Gastrocnemius medialis (tissue), 4 donors: ENCODE measurements at regions of chr17 and their contacts with region 1.

Region 1: DNA sequence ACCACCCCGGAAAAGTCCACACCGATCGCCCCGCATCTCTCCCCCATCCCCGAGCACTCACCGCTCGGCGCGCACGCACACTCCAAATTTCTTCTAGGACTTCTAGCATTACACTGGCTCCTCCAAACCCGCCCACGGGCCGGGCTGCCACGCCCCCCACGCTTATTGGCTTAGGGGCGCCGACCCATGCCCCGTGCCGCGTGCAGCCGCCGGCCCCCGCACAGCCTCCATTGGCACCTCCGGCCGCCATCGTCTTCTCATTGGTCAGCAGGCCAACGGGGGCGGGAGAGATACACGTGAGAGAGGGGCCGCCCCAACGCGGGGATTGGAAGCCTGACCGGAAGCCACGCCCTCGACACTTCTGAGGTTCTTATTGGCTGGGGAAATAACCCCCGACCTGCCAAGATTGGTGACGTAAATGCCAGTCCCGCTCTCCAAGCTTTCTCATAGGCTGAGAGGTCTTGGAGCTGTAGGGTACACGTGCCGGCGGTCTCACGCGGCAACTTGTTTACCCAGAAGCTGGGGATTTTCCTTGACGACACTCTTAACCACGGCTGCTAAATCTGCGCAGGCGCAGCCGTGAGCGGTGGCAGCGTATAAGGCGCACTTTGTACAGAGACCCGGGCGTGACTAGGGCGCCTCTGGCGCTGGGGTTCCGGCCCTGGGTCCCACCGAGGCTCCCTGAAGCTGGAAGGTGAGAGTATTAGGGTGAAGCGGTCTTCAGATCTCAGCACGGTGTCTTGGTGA is 4.2 kb upstream of the PER1 start:
- DNase-seq: peak; percentile 100
- ATAC-seq: peak; percentile 53 to 63
- H3K4me3 ChIP-seq: peak overlapping the region; percentile 96 to 97 (median 96)
- H3K27ac ChIP-seq: peak overlapping the region; percentile 99 to 100 (median 100)
- H3K4me1 ChIP-seq: peaks cover 34 to 39% of the 10 kb centered on the region in 2 donors
- H3K27me3 ChIP-seq: no peaks in the 10 kb centered on the region
- CTCF ChIP-seq: peak in 2 of 5 experiments; percentile 11 to 25
- POLR2A ChIP-seq: peak; percentile 100

Region 2: DNA sequence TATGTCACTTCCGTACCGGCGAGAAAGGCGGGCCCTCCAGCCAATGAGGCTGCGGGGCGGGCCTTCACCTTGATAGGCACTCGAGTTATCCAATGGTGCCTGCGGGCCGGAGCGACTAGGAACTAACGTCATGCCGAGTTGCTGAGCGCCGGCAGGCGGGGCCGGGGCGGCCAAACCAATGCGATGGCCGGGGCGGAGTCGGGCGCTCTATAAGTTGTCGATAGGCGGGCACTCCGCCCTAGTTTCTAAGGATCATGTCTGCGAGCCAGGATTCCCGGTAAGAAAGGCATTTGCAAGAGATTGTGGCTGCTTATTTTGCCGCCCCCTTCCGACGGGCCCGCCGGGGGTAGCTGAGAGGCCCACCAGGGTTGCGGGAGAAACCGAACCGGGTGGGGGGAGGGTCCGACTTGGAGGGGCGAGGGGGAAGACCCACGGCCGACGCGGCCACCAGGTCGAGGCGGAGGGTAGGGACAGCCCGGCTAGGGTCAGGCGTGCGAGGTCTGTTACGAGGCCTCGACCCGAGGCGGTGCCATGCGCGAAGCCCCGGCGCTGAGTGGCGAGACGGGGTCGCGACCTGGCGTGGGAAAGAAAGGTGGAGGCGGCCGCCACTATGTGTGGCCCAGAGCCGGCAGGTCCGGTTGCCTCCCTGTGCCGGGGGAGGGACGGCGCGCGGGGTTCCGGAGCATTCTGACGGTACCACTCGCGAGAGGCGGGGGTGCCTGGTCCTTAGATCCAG is 583.7 kb before region 1 on chr17:
- in situ Hi-C with region 1: no loop called
- intact Hi-C with region 1: loop called (anchors 10 kb)
- DNase-seq: peak; percentile 99 to 100
- ATAC-seq: peak; percentile 14 to 83
- H3K4me3 ChIP-seq: peak overlapping the region; percentile 90 to 100 (median 95)
- H3K27ac ChIP-seq: peak overlapping the region; percentile 98 to 100 (median 99)
- H3K4me1 ChIP-seq: peaks cover 37 to 42% of the 10 kb centered on the region in 2 donors
- H3K27me3 ChIP-seq: no peaks in the 10 kb centered on the region
- CTCF ChIP-seq: no peak
- POLR2A ChIP-seq: peak; percentile 98 to 99

Region 3: GRCh38 chr17:8138672-8139371 is 17.6 kb before region 1 on chr17:
- in situ Hi-C with region 1: no loop called
- intact Hi-C with region 1: loop called (anchors 1 kb)
- DNase-seq: peak; percentile 82 to 93
- ATAC-seq: peak; percentile 66 to 74
- H3K4me3 ChIP-seq: peak overlapping the region; percentile 2 to 23 (median 2)
- H3K27ac ChIP-seq: peak overlapping the region; percentile 84 to 100 (median 100)
- H3K4me1 ChIP-seq: peaks cover 29 to 47% of the 10 kb centered on the region in 2 donors
- H3K27me3 ChIP-seq: no peaks in the 10 kb centered on the region
- CTCF ChIP-seq: peak; percentile 88 to 93 (median 89)
- POLR2A ChIP-seq: peak; percentile 64 to 78

Region 4: DNA sequence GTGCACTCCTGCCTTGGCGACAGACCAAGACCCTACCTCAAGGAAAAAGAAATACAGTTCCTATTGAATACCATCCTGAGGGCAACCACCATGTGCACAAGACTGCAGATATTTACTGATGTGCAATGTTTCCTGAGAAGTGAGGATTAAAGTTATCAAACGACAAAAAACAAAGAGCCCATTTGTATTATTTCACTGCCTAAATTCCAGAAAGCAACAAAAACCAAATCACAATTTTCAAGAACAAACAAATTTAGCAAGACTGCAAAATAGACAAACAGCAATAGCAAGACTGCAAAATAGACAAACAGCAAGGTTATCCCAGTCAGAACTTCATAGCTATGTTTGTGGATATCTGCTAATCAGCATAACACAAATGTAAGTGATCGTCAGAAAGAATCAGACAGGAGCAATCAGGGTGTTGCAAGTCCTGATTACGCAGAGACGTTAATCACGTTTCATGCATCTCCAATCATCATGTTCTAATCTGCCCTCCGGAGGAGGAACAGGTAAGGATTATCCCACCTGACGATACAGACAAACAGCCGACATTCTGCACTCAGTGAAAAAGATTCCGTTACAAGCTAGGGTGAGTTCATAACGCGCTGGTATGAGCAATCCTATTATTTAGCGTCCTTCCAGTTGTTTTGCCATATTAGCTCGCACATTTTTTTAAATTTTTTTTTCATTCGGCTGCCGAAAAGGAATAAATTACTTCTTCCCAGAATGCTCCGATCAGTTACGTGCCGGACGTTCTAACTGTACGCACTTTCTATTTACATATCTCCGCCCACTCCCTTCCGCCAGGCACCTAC is 16.8 kb after region 1 on chr17:
- in situ Hi-C with region 1: no loop called
- intact Hi-C with region 1: no loop called
- DNase-seq: peak; percentile 74 to 85
- ATAC-seq: peak; percentile 95 to 96
- H3K4me3 ChIP-seq: peak overlapping the region; percentile 29 to 54 (median 45)
- H3K27ac ChIP-seq: peak overlapping the region; percentile 77 to 91 (median 85)
- H3K4me1 ChIP-seq: peaks cover 8 to 25% of the 10 kb centered on the region in 2 donors
- H3K27me3 ChIP-seq: no peaks in the 10 kb centered on the region
- CTCF ChIP-seq: peak in 1 of 5 experiments; percentile 9
- POLR2A ChIP-seq: peak; percentile 99 to 100

Region 5: DNA sequence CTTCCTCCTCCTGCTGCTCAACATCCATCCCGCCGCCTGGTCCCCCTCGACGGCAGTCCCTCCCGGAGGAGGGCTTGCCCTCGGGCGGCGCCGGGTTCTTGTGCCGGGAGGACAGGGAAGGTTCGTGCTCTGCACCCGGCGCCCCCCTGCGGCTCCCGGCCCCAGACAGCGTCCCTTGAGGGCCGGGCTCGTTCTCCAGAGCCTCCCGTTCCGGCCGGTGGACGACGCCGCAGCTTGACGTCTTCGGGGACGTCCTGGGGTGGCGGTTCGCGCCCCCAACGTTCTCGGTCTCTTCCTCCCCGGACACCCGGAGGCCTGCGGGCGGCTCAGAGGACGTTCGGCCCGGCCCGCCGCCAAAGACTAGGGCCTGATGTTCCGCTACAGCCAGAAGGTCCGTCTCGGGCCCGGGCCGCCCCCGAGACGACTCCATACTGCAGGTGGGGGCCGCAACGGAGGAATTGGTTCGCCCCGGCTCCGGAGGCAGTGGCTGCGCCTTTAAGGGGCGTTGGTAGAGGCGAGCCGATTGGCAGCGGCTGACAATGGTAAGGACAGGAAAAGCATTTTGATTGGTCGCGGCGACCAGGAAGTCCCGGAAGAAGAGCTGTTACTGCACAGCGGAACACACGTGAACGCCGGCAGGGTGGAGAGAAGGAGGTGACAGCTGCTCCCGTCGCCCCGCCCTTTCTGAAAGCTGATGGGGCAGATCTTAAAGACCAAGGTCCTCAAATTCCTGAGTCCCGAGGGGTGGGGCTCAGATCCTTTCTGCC is 33.5 kb after region 1 on chr17 and contains the start of gene BORCS6:
- in situ Hi-C with region 1: no loop called
- intact Hi-C with region 1: loop called (anchors 2 kb)
- DNase-seq: peak; percentile 99
- ATAC-seq: peak; percentile 68 to 69
- H3K4me3 ChIP-seq: peak within 1 kb of the TSS; percentile 59 to 98 (median 84)
- H3K27ac ChIP-seq: peak within 1 kb of the TSS; percentile 86 to 99 (median 97)
- H3K4me1 ChIP-seq: peaks cover 37 to 42% of the 10 kb centered on the region in 2 donors
- H3K27me3 ChIP-seq: no peaks in the 10 kb centered on the region
- CTCF ChIP-seq: peak in 1 of 5 experiments; percentile 19
- POLR2A ChIP-seq: peak; percentile 83 to 91
- total RNA-seq, gene BORCS6: 16.2 to 34.5 (median 26.2) TPM

Region 6: GRCh38 chr17:8776881-8777280 is 620.5 kb after region 1 on chr17:
- in situ Hi-C with region 1: no loop called
- intact Hi-C with region 1: no loop called
- DNase-seq: no peak
- ATAC-seq: no peak
- H3K4me3 ChIP-seq: no peak overlapping the region
- H3K27ac ChIP-seq: no peak overlapping the region
- H3K4me1 ChIP-seq: no peaks in the 10 kb centered on the region
- H3K27me3 ChIP-seq: no peaks in the 10 kb centered on the region
- CTCF ChIP-seq: no peak
- POLR2A ChIP-seq: no peak